ENCODE measurements at regions of chr16 and their contacts with region 1.

Region 1: DNA sequence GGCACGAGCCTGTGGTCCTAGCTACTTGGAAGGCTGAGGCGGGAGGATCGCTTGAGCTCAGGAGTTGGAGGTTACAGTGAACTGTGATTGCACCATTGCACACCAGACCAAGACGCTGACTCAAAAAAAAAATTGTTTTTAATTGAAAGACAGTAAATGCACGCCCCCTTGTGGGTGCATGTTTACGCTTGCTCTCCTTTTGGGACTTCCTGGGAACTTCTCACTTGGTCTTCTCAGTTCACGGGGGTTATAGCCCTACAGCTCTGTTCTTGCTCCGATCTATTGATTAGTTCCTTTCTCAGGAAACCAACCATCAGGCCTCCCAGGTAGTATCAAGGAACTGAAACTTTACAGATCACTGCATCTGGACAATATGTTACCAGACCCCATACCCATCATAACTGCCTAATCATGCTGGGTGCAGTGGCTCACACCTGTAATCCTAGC is 14.2 kb upstream of the RIPOR1 start:
- DNase-seq: peak; percentile 89
- ATAC-seq: peak; percentile 14
- H3K4me3 ChIP-seq: no peak overlapping the region
- H3K4me3 Mint-ChIP-seq: peak overlapping the region; percentile 66
- H3K27ac ChIP-seq: peak overlapping the region; percentile 59 to 67
- H3K27ac Mint-ChIP-seq: peak overlapping the region; percentile 96
- H3K4me1 ChIP-seq: peaks cover 64 to 76% of the 10 kb centered on the region in 2 donors
- H3K4me1 Mint-ChIP-seq: peaks cover 64% of the 10 kb centered on the region
- H3K27me3 ChIP-seq: no peaks in the 10 kb centered on the region
- H3K27me3 Mint-ChIP-seq: no peaks in the 10 kb centered on the region
- CTCF ChIP-seq: peak; percentile 68

Region 2: DNA sequence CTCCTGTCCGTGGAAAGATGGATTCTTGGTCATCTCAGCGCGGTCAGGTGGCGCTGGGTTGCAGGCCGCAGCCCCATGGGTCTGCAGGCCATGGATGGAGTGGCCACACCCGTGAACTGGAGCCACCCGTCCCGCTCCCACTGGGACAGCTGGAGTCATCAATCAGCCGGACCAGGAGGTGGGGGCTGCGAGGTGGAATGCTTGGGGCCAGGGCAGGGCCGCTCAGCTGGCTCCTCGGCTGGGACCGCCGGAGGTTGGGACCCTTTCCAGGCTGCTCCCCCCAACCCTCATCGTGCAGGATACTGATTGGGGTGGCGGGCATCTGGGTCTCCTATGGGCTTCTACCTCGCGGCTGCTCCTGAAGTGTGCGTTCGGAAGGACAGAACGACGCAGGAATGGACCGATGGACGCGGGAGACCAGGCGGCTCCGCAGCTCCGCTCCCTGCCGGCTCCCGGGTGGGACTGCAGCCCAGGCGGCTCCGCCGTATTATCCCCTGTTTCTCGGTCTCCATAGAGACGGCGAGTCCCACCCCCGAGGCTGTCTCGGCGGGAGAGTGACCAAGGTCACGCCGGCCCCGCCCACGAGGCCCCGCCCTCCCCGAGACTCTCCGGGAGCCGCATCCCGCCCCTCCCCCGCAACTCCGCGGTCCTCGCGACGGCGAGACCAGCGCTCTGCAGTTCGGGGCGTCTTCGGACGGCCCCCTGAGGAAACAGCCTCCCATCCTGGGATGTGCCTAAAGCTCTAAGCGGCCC is 121.2 kb before region 1 on chr16 and contains the start of gene TPPP3:
- CTCF ChIA-PET with region 1: no interaction called
- POLR2A ChIA-PET with region 1: no interaction called
- intact Hi-C with region 1: no loop called
- DNase-seq: no peak
- ATAC-seq: no peak
- H3K4me3 ChIP-seq: peak within 1 kb of the TSS in 3 of 5 experiments; percentile 21 to 39 (median 31)
- H3K4me3 Mint-ChIP-seq: peak within 1 kb of the TSS; percentile 85
- H3K27ac ChIP-seq: no peak within 1 kb of the TSS
- H3K27ac Mint-ChIP-seq: peak within 1 kb of the TSS; percentile 10
- H3K4me1 ChIP-seq: peaks cover 35 to 36% of the 10 kb centered on the region in 2 donors
- H3K4me1 Mint-ChIP-seq: peaks cover 26% of the 10 kb centered on the region
- H3K27me3 ChIP-seq: peaks cover 0 to 42% (median 31%) of the 10 kb centered on the region in 4 experiments
- H3K27me3 Mint-ChIP-seq: peaks cover 36% of the 10 kb centered on the region
- CTCF ChIP-seq: peak; percentile 38
- total RNA-seq, gene TPPP3: not detected in 2 replicates

Region 3: DNA sequence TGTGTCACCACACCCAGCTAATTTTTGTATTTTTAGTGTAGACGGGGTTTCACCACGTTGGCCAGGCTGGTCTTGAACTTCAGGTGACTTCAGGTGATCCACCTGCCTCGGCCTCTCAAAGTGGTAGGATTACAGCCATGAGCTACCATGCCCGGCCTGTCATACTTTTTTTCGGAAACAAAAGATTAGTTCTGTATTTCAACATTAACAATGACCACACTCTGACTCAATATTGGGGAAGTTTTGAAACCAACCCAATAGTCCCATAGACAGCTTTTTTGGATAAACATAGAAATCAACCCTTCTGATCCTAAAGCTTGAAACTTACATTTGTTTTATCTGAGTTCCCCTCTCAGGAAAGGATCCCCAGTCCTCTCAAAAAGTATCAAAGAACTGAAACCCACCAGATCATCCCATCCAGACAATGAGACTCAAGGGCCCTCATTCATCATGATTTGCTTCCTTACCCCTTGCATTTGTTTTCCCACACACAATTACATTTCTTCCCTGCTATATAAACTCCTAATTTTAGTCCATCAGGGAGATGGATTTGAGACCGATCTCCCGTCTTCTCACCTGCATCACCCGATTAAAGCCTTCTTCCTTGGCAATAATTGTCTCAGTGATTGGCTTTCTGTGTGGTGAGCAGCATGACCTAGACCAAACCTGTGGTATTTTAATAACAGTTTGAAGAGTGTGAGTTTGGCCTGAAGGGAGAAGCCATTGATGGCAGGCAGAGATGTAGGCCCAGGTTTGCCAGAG is 23.9 kb before region 1 on chr16:
- CTCF ChIA-PET with region 1: interaction called, 817 read pairs
- POLR2A ChIA-PET with region 1: interaction called, 12 read pairs
- intact Hi-C with region 1: loop called (anchors 1 kb)
- DNase-seq: no peak
- ATAC-seq: no peak
- H3K4me3 ChIP-seq: no peak overlapping the region
- H3K4me3 Mint-ChIP-seq: peak overlapping the region; percentile 51
- H3K27ac ChIP-seq: peak overlapping the region; percentile 70 to 89
- H3K27ac Mint-ChIP-seq: peak overlapping the region; percentile 82
- H3K4me1 ChIP-seq: peaks cover 73 to 84% of the 10 kb centered on the region in 2 donors
- H3K4me1 Mint-ChIP-seq: peaks cover 71% of the 10 kb centered on the region
- H3K27me3 ChIP-seq: no peaks in the 10 kb centered on the region
- H3K27me3 Mint-ChIP-seq: no peaks in the 10 kb centered on the region
- CTCF ChIP-seq: no peak

Region 4: GRCh38 chr16:67504041-67505021 is 10.1 kb before region 1 on chr16:
- CTCF ChIA-PET with region 1: interaction called, 817 read pairs
- POLR2A ChIA-PET with region 1: no interaction called
- intact Hi-C with region 1: no loop called
- DNase-seq: peak; percentile 40
- ATAC-seq: peak; percentile 80
- H3K4me3 ChIP-seq: peak overlapping the region in 1 of 5 experiments; percentile 24
- H3K4me3 Mint-ChIP-seq: peak overlapping the region; percentile 68
- H3K27ac ChIP-seq: peak overlapping the region; percentile 47 to 77
- H3K27ac Mint-ChIP-seq: peak overlapping the region; percentile 91
- H3K4me1 ChIP-seq: peaks cover 34 to 46% of the 10 kb centered on the region in 2 donors
- H3K4me1 Mint-ChIP-seq: peaks cover 49% of the 10 kb centered on the region
- H3K27me3 ChIP-seq: no peaks in the 10 kb centered on the region
- H3K27me3 Mint-ChIP-seq: no peaks in the 10 kb centered on the region
- CTCF ChIP-seq: no peak

Region 5: GRCh38 chr16:67641779-67642708 is 127.6 kb after region 1 on chr16:
- CTCF ChIA-PET with region 1: interaction called, 23 read pairs
- POLR2A ChIA-PET with region 1: interaction called, 3 read pairs
- intact Hi-C with region 1: no loop called
- DNase-seq: no peak
- ATAC-seq: no peak
- H3K4me3 ChIP-seq: no peak overlapping the region
- H3K4me3 Mint-ChIP-seq: no peak overlapping the region
- H3K27ac ChIP-seq: no peak overlapping the region
- H3K27ac Mint-ChIP-seq: no peak overlapping the region
- H3K4me1 ChIP-seq: peaks cover 12 to 20% of the 10 kb centered on the region in 2 donors
- H3K4me1 Mint-ChIP-seq: peaks cover 16% of the 10 kb centered on the region
- H3K27me3 ChIP-seq: no peaks in the 10 kb centered on the region
- H3K27me3 Mint-ChIP-seq: no peaks in the 10 kb centered on the region
- CTCF ChIP-seq: no peak

Region 6: DNA sequence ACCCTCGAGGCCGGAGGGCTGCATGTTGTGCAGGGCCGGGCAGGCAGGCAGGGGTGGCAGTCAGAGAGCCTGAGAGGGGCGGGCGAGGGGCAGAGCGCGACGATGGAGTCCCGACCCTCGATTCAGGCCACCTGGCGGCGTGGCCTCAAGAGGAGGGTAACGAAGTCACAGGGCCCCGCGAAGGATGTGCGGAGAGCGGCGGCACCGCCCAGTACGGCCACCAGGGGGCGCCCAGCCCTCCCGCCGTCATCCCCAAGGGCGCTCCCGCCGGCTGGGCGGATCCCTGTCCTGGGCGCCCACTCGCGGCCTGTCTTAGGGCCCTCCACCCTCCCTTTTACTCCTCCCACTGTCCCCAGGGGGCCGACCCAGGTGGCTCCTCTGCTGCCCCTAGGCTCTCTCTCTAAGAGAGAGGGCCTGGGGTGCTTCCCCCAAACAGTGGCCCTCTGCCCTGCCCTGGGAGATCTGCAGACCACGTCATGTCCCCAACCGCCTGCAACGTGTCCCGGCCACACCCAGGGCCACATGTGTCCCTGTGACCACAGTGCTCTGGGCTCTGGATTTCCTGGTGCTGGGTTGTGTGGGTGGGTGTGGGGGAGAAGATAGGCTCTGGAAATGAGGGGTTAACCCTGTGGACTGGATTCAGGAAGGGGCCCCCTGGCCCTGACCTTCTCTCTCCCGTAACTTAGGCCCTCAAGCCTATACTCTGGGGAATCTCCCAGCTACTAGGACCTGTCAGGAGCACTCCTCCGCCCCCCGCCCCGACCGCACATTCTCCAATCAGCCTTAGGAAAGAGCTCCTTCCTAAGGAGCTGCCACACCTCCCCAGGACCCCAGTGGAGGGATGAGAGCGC is 479.0 kb after region 1 on chr16:
- CTCF ChIA-PET with region 1: no interaction called
- POLR2A ChIA-PET with region 1: no interaction called
- intact Hi-C with region 1: loop called (anchors 5 kb)
- DNase-seq: peak; percentile 92
- ATAC-seq: peak; percentile 87
- H3K4me3 ChIP-seq: peak overlapping the region; percentile 26 to 40 (median 31)
- H3K4me3 Mint-ChIP-seq: peak overlapping the region; percentile 82
- H3K27ac ChIP-seq: peak overlapping the region; percentile 86 to 89
- H3K27ac Mint-ChIP-seq: peak overlapping the region; percentile 99
- H3K4me1 ChIP-seq: peaks cover 49 to 60% of the 10 kb centered on the region in 2 donors
- H3K4me1 Mint-ChIP-seq: peaks cover 67% of the 10 kb centered on the region
- H3K27me3 ChIP-seq: no peaks in the 10 kb centered on the region
- H3K27me3 Mint-ChIP-seq: no peaks in the 10 kb centered on the region
- CTCF ChIP-seq: peak; percentile 96